ENCODE measurements at regions of chr18 and their contacts with region 1.

Region 1: GRCh38 chr18:62714671-62715435 is 488 bp upstream of the PHLPP1 start:
- DNase-seq: peak; percentile 99
- H3K4me3 ChIP-seq: peak overlapping the region; percentile 75
- H3K27ac ChIP-seq: peak overlapping the region; percentile 93
- H3K4me1 ChIP-seq: peaks cover 35% of the 10 kb centered on the region
- H3K27me3 ChIP-seq: no peaks in the 10 kb centered on the region
- CTCF ChIP-seq: peak; percentile 87

Region 2: DNA sequence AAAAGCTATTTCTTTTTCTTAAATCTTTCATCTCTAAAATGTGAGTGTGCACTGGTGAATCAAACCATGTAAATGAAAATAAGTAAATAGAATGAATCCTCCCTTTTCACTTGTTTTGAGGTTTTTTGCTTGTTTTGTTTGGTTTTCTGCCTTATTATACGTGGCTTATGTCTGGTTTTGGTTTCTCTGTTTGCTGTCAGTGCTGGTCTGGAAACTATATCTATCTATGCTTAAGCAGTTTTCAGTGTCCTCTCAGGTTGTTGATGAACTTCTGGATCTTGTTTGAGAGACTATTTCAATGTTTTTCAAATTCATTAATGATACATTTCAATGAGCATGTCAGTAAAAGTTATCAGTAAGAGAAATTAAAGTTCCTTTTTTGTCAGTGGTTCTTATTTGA is 437.8 kb before region 1 on chr18:
- intact Hi-C with region 1: no loop called
- DNase-seq: no peak
- H3K4me3 ChIP-seq: no peak overlapping the region
- H3K27ac ChIP-seq: no peak overlapping the region
- H3K4me1 ChIP-seq: peaks cover 19% of the 10 kb centered on the region
- H3K27me3 ChIP-seq: no peaks in the 10 kb centered on the region
- CTCF ChIP-seq: no peak

Region 3: DNA sequence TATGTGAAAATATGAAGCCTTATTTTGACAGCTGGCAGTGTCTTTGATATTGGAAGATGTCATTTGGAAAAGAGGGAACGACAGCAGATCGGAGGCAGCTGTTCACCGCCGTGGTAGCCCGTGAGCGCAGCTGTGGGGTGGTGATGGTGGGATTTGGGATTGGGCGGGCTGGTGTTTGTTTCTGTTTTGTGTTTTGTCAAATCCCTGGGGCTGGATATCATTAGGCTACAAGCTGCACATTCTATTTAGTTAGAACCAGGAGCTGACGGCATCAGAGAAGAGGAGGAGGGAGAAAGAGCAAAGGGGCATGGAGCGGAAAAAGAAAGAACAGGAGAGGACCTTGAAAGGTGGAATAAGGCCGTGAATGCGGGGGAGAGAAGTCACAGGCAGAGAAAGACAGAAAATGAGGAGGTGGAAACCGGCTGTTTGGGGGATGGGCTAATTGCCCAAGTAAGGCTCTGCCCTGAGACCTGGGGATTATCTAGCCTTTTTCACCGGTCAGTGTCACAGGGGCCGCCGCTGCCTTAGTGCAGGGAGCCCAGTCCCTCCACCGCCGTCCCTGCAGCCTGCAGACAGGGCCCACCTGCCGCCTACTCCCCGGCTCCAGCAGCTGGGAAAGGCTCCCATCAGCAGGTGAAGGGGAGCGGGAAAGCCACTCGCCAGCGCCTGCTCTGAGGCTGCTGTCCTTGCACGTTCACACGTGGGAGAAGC is 104.0 kb before region 1 on chr18:
- intact Hi-C with region 1: no loop called
- DNase-seq: no peak
- H3K4me3 ChIP-seq: peak overlapping the region; percentile 59
- H3K27ac ChIP-seq: peak overlapping the region; percentile 80
- H3K4me1 ChIP-seq: peaks cover 29% of the 10 kb centered on the region
- H3K27me3 ChIP-seq: peaks cover 22% of the 10 kb centered on the region
- CTCF ChIP-seq: no peak

Region 4: GRCh38 chr18:62767321-62767720 is 52.5 kb after region 1 on chr18:
- intact Hi-C with region 1: no loop called
- DNase-seq: no peak
- H3K4me3 ChIP-seq: no peak overlapping the region
- H3K27ac ChIP-seq: no peak overlapping the region
- H3K4me1 ChIP-seq: peaks cover 16% of the 10 kb centered on the region
- H3K27me3 ChIP-seq: no peaks in the 10 kb centered on the region
- CTCF ChIP-seq: no peak

Region 5: GRCh38 chr18:62982600-62983251 is 267.9 kb after region 1 on chr18:
- intact Hi-C with region 1: loop called (anchors 5 kb)
- DNase-seq: no peak
- H3K4me3 ChIP-seq: peak overlapping the region; percentile 50
- H3K27ac ChIP-seq: no peak overlapping the region
- H3K4me1 ChIP-seq: peaks cover 8% of the 10 kb centered on the region
- H3K27me3 ChIP-seq: no peaks in the 10 kb centered on the region
- CTCF ChIP-seq: peak; percentile 83